Activated CD4-positive, alpha-beta memory T cell treated with anti-CD3 and anti-CD28 coated beads, Interleukin-2, amount 10 ng/mL, durations not matched to agents 7 days and 5 days (primary cell): ENCODE measurements at regions of chr16 and their contacts with region 1.

Region 1: DNA sequence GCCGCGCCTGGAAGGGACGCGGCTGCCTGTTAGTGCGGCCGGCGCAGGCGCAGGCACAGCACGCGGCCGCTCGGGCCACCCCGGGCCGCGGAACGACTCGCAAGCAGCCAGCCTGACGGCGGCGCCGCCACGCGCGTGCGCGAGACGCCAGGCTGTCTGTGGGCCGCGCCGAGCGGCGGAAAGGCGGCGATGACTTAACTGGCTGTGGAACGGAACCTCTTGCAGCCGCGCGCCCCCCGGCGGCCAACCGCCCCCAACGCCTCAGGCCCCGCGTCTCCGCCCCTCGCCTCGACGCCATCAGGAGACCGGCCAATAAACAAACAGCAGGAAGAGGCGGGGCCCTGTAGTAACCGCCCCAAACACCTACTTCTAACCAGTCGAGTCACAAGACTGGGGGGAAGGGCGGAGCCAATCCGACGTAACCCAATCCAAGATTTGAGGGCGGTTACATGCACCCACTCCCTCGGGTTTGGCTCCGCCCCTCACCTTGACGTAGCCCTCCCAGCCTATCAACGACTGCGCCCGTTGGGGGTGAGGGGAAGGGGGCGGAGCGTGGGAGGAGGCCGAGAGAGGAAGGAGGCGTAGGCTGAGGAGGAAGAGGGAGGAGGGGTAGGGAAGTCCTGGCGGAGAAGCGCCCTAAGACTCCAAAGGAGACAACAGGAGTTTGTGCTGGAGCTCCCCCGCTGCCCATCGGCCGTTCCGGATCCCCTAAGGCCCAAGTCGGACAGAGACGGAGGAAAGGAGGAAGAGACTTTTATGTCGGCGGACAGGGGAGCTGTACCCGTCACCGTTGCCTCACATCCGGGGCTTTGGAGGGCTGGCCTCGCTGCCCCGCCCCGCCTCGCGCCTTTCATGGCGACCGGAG is at the start of gene FBRS:
- DNase-seq: peak; percentile 100
- H3K4me3 Mint-ChIP-seq: peak within 1 kb of the TSS; percentile 86
- H3K27ac Mint-ChIP-seq: peak within 1 kb of the TSS; percentile 98
- H3K4me1 Mint-ChIP-seq: peaks cover 47% of the 10 kb centered on the region
- H3K27me3 Mint-ChIP-seq: no peaks in the 10 kb centered on the region
- total RNA-seq, gene FBRS: 106 to 107 TPM

Region 2: GRCh38 chr16:30637942-30638341 is 20.2 kb before region 1 on chr16:
- CTCF ChIA-PET with region 1: interaction called, 15 read pairs
- POLR2A ChIA-PET with region 1: interaction called, 5 read pairs
- DNase-seq: peak; percentile 38
- H3K4me3 Mint-ChIP-seq: no peak overlapping the region
- H3K27ac Mint-ChIP-seq: no peak overlapping the region
- H3K4me1 Mint-ChIP-seq: peaks cover 19% of the 10 kb centered on the region
- H3K27me3 Mint-ChIP-seq: no peaks in the 10 kb centered on the region

Region 3: DNA sequence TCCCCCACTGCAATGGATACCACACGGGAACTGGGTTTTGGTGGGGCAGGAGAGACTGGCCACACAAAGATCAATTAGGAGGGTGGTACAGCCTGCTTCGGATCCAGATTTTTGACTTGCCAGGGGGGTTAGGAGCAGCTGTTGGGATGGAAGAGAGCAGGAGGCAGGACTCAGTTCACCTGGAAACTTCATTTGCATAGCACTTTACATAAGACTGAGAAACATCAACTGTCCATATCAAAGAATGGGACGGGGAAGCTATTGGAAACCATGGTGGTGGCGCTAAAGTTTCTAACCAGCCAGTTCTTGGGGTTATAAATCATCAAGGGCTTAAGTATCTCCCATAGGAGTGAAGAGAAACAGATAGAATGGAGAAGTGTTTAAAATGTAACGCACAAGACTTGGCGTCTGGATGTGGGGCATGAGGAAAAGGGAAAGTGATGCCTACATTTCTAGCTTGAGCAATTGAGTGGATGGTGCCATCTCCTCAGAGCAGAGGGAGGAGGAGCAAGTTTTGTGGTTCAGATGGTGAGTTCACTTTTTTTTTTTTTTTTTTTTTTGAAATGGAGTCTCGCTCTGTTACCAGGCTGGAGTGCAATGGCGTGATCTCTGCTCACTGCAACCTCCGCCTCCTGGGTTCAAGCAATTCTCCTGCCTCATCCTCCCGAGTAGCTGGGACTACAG is 34.4 kb after region 1 on chr16:
- CTCF ChIA-PET with region 1: interaction called, 67 read pairs
- POLR2A ChIA-PET with region 1: interaction called, 68 read pairs
- DNase-seq: no peak
- H3K4me3 Mint-ChIP-seq: no peak overlapping the region
- H3K27ac Mint-ChIP-seq: peak overlapping the region; percentile 8
- H3K4me1 Mint-ChIP-seq: peaks cover 26% of the 10 kb centered on the region
- H3K27me3 Mint-ChIP-seq: no peaks in the 10 kb centered on the region

Region 4: GRCh38 chr16:30698139-30698815 is 40.2 kb after region 1 on chr16:
- CTCF ChIA-PET with region 1: interaction called, 67 read pairs
- POLR2A ChIA-PET with region 1: interaction called, 68 read pairs
- DNase-seq: peak; percentile 99
- H3K4me3 Mint-ChIP-seq: peak overlapping the region; percentile 98
- H3K27ac Mint-ChIP-seq: peak overlapping the region; percentile 96
- H3K4me1 Mint-ChIP-seq: peaks cover 48% of the 10 kb centered on the region
- H3K27me3 Mint-ChIP-seq: no peaks in the 10 kb centered on the region